ENCODE measurements at regions of chr15 and their contacts with region 1.

Region 1: DNA sequence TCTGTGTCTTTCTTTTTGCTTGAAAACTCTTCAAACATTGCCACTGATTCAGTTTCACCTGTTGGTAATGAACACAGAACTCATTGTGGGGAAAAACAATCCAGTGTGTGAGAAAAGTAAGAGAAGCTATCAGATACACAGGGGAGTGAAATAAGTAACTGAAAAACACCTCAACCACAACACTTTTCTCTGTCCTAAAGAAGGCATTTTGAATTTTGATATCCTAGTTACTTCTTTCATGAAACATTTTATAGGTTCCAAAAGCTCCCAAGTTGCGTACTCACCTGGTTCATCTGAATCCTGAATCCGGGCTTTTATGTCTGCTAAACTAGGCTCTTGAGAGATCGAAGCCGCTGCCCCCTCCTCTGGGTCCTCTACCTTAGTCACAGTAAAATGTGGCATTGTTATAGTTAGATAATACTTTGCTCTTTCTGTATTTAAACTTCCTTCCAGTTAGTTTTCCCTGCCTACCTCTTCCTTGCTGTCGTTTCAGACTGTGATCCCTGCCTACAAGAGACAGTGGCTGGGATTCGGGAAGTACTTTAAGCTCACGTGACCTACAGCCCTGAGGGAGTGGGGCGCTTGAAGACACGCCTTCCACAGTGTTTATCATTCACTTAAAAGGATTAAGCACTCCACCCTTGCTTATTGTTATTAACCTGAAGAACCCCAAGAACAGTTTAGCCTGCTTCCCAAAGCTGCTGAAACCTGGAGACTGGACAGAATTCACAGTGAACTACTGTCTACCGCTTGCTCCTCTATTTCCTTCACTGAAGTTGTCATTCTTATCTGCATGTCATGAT is 19.1 kb downstream of the SLC12A6 start:
- DNase-seq: peak in 7 of 14 experiments; percentile 12 to 62 (median 45)
- ATAC-seq: peak; percentile 85
- H3K4me3 ChIP-seq: peak overlapping the region; percentile 69
- H3K4me3 Mint-ChIP-seq: peak overlapping the region; percentile 99
- H3K27ac ChIP-seq: peak overlapping the region; percentile 11 to 38
- H3K27ac Mint-ChIP-seq: peak overlapping the region; percentile 97
- H3K4me1 ChIP-seq: peaks cover 16% of the 10 kb centered on the region
- H3K4me1 Mint-ChIP-seq: peaks cover 74% of the 10 kb centered on the region
- H3K27me3 ChIP-seq: no peaks in the 10 kb centered on the region
- H3K27me3 Mint-ChIP-seq: no peaks in the 10 kb centered on the region
- CTCF ChIP-seq: no peak

Region 2: DNA sequence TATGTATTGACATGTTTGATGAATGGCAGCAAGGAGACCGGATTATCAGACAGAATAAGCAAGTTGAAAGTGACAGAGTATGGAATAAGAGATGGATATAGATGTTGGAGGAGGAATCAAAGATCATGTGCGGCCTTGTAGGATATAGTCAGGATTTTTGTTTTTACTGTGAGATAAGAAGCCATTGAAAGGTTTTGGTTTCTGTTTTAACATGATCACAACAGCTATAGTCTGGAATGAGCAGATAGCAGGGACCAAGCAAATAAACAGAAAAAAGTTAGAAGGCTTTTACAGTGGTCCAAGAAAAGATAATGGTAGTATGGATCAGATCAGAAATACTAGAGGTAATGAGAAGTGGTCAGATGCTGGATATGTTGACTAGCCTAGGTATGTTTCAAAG is 33.5 kb before region 1 on chr15:
- CTCF ChIA-PET with region 1: no interaction called
- POLR2A ChIA-PET with region 1: interaction called, 3 read pairs
- intact Hi-C with region 1: loop called in 1 of 2 experiments (anchors 5 kb)
- DNase-seq: no peak
- ATAC-seq: no peak
- H3K4me3 ChIP-seq: no peak overlapping the region
- H3K4me3 Mint-ChIP-seq: no peak overlapping the region
- H3K27ac ChIP-seq: no peak overlapping the region
- H3K27ac Mint-ChIP-seq: peak overlapping the region; percentile 52
- H3K4me1 ChIP-seq: no peaks in the 10 kb centered on the region
- H3K4me1 Mint-ChIP-seq: peaks cover 50% of the 10 kb centered on the region
- H3K27me3 ChIP-seq: no peaks in the 10 kb centered on the region
- H3K27me3 Mint-ChIP-seq: no peaks in the 10 kb centered on the region
- CTCF ChIP-seq: no peak

Region 3: GRCh38 chr15:34331809-34332208 is 13.3 kb after region 1 on chr15:
- CTCF ChIA-PET with region 1: interaction called, 4 read pairs
- POLR2A ChIA-PET with region 1: interaction called, 127 read pairs
- intact Hi-C with region 1: loop called in 1 of 2 experiments (anchors 2 kb)
- DNase-seq: peak in 3 of 14 experiments; percentile 43 to 62 (median 49)
- ATAC-seq: peak; percentile 40
- H3K4me3 ChIP-seq: no peak overlapping the region
- H3K4me3 Mint-ChIP-seq: peak overlapping the region; percentile 40
- H3K27ac ChIP-seq: peak overlapping the region; percentile 18 to 39
- H3K27ac Mint-ChIP-seq: peak overlapping the region; percentile 98
- H3K4me1 ChIP-seq: peaks cover 55% of the 10 kb centered on the region
- H3K4me1 Mint-ChIP-seq: peaks cover 87% of the 10 kb centered on the region
- H3K27me3 ChIP-seq: no peaks in the 10 kb centered on the region
- H3K27me3 Mint-ChIP-seq: no peaks in the 10 kb centered on the region
- CTCF ChIP-seq: no peak

Region 4: GRCh38 chr15:34472947-34473346 is 154.5 kb after region 1 on chr15:
- CTCF ChIA-PET with region 1: no interaction called
- POLR2A ChIA-PET with region 1: no interaction called
- intact Hi-C with region 1: no loop called
- DNase-seq: no peak
- ATAC-seq: no peak
- H3K4me3 ChIP-seq: no peak overlapping the region
- H3K4me3 Mint-ChIP-seq: no peak overlapping the region
- H3K27ac ChIP-seq: no peak overlapping the region
- H3K27ac Mint-ChIP-seq: no peak overlapping the region
- H3K4me1 ChIP-seq: no peaks in the 10 kb centered on the region
- H3K4me1 Mint-ChIP-seq: no peaks in the 10 kb centered on the region
- H3K27me3 ChIP-seq: peaks cover 0 to 2% of the 10 kb centered on the region in 2 experiments
- H3K27me3 Mint-ChIP-seq: peaks cover 36% of the 10 kb centered on the region
- CTCF ChIP-seq: no peak

Measured in CD4-positive, alpha-beta T cell (primary cell).